GM12878 (cell line): ENCODE measurements at regions of chr1 and their contacts with region 1.

Region 1: DNA sequence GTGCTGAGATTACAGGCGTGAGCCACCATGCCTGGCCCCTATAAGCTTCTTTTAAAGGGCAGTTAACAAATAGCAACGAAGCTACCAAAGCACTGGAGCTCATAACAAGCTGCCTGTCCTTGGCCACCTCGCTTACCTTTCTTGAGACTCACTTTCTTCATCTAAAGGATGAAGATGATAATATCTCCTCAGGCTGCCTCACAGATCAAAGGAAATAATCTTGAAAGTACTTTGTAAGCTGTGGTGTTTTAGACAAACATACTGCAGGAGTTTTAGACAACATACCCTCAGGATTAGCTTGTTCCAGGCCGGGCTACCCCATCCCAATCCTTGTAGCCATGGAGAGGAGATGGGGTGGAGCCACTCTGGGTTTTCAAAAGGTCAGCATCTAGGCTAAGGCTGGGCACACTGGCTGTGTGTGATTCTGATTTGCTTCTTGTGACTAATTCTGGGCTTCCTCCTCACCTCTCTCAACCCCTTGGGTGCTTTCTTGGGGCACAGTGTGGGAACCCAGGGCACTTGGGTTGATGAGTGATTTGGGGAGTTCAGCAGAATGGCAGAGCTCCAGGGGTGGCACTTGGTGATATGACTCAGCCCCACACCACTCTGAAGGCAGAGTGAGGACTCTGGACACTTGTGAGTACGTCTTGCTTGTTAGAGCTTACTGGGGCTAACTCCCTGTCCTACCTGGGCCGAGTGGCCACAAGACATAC is 5.2 kb downstream of the GPR25 start:
- DNase-seq: peak; percentile 89
- ATAC-seq: peak; percentile 84
- H3K4me3 ChIP-seq: no peak overlapping the region
- H3K27ac ChIP-seq: no peak overlapping the region
- H3K4me1 ChIP-seq: peaks cover 17% of the 10 kb centered on the region
- H3K27me3 ChIP-seq: no peaks in the 10 kb centered on the region
- CTCF ChIP-seq: no peak
- EP300 ChIP-seq: peak in 1 of 2 experiments; percentile 58; a peak in 1 of 4 replicates
- POLR2A ChIP-seq: no peak
- RAD21 ChIP-seq: no peak

Region 2: DNA sequence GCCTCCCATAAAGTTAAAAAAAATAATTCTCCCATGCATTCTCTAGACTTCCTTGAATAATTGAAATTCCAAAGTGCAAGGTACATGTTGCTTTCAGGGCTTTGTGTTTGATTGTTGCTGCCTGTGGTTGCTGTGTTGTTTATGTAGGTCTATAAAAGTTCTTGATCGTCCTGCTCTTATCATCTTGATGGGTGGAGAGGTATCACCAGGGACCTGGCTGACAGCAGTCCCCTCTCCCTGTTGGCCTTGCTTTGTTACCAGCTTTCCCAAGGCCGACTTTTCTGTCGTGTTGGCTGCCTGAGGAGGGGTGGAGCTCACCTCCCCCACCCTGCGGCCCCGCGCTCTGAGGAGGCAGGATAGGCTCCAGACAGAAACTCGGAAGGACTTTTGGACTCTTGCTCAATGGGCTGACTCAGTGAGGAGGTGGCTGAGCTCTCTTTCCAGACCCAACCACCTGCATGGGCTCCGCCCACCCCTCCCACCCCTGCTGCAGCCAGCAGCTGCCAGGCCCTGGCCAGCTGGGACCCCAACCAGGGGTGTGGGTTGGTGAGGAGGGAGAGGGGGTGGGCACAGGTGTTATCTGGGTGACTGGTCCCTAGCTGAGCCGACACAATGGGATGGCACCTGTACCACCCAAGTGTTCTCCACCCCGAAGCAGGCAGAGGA is 18.7 kb after region 1 on chr1:
- CTCF ChIA-PET with region 1: interaction called, 56 read pairs
- POLR2A ChIA-PET with region 1: interaction called, 14 read pairs
- RAD21 ChIA-PET with region 1: interaction called, 98 read pairs
- SMC1A ChIA-PET with region 1: interaction called, 10 read pairs
- in situ Hi-C with region 1: no loop called
- intact Hi-C with region 1: no loop called
- DNase-seq: no peak
- ATAC-seq: no peak
- H3K4me3 ChIP-seq: no peak overlapping the region
- H3K27ac ChIP-seq: no peak overlapping the region
- H3K4me1 ChIP-seq: peaks cover 19% of the 10 kb centered on the region
- H3K27me3 ChIP-seq: no peaks in the 10 kb centered on the region
- CTCF ChIP-seq: no peak
- EP300 ChIP-seq: no peak
- POLR2A ChIP-seq: no peak
- RAD21 ChIP-seq: no peak